Activated CD4-positive, alpha-beta T cell treated with anti-CD3 and anti-CD28 coated beads, Interleukin-2, amount 10 ng/mL, durations not matched to agents 24 days and 14 days (primary cell): ENCODE measurements at regions of chr15 and their contacts with region 1.

Region 1: GRCh38 chr15:41022487-41023090 is 69.3 kb downstream of the CHAC1 start:
- DNase-seq: peak; percentile 84
- H3K4me3 Mint-ChIP-seq: no peak overlapping the region
- H3K27ac Mint-ChIP-seq: no peak overlapping the region
- H3K4me1 Mint-ChIP-seq: peaks cover 10% of the 10 kb centered on the region
- H3K27me3 Mint-ChIP-seq: no peaks in the 10 kb centered on the region

Region 2: GRCh38 chr15:40941528-40942336 is 80.9 kb before region 1 on chr15:
- intact Hi-C with region 1: loop called (anchors 5 kb)
- DNase-seq: peak; percentile 92
- H3K4me3 Mint-ChIP-seq: peak overlapping the region; percentile 88
- H3K27ac Mint-ChIP-seq: peak overlapping the region; percentile 87
- H3K4me1 Mint-ChIP-seq: peaks cover 40% of the 10 kb centered on the region
- H3K27me3 Mint-ChIP-seq: no peaks in the 10 kb centered on the region

Region 3: DNA sequence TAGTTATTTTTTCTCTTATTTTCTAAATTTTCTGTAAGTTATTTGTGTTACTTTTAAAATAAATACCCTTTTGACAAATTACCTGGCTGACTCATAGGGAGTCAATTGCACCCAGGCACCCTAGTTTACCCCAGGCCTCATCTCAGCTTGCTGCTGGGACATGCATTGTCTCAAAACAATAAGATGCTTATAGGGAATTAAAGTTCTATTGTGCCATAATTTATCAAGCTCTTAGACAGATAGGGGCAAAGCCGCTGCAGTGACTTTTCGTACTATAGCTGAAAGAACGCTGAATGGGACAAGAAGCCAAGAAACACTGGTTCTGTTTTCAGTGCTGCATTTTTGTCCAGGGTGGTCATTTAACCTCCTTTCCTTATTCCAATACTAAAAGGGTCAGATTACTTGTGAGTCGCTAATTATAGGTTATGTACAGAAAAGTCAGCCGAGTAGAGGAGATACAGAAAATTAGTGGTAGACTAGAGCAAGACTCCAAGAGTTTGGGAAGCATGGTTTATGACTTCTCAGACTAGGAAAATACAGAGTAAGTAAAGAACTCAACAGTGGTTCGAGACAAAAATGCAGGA is 157.7 kb after region 1 on chr15:
- intact Hi-C with region 1: loop called (anchors 10 kb)
- DNase-seq: no peak
- H3K4me3 Mint-ChIP-seq: no peak overlapping the region
- H3K27ac Mint-ChIP-seq: no peak overlapping the region
- H3K4me1 Mint-ChIP-seq: peaks cover 1% of the 10 kb centered on the region
- H3K27me3 Mint-ChIP-seq: peaks cover 5% of the 10 kb centered on the region

Region 4: DNA sequence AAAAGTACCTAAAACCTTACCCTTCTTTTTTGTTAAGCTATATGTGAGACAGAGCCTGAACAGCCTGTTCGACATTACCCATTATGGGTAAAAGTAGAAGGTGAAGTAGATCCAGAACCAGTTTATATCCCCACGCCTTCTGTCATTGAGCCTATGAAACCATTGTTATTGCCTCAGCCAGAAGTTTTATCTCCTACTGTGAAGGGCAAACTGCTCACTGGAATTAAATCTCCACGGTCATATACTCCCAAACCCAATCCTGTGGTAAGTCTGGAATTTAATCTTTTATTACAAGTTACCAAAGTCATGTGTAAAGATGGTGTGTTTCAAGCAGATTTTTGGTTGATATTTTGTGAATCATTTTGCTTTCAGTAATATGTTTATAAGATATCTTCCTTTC is 704.6 kb after region 1 on chr15:
- intact Hi-C with region 1: no loop called
- DNase-seq: no peak
- H3K4me3 Mint-ChIP-seq: no peak overlapping the region
- H3K27ac Mint-ChIP-seq: no peak overlapping the region
- H3K4me1 Mint-ChIP-seq: no peaks in the 10 kb centered on the region
- H3K27me3 Mint-ChIP-seq: no peaks in the 10 kb centered on the region